Panc1 (cell line): ENCODE measurements at regions of chr2 and their contacts with region 1.

Region 1: GRCh38 chr2:121649596-121650314 is 493 bp upstream of the CLASP1 start:
- DNase-seq: peak; percentile 95
- ATAC-seq: peak; percentile 98
- H3K4me3 ChIP-seq: peak overlapping the region; percentile 92 to 95
- H3K27ac ChIP-seq: peak overlapping the region; percentile 99
- H3K4me1 ChIP-seq: peaks cover 19% of the 10 kb centered on the region
- H3K27me3 ChIP-seq: no peaks in the 10 kb centered on the region
- CTCF ChIP-seq: no peak

Region 2: DNA sequence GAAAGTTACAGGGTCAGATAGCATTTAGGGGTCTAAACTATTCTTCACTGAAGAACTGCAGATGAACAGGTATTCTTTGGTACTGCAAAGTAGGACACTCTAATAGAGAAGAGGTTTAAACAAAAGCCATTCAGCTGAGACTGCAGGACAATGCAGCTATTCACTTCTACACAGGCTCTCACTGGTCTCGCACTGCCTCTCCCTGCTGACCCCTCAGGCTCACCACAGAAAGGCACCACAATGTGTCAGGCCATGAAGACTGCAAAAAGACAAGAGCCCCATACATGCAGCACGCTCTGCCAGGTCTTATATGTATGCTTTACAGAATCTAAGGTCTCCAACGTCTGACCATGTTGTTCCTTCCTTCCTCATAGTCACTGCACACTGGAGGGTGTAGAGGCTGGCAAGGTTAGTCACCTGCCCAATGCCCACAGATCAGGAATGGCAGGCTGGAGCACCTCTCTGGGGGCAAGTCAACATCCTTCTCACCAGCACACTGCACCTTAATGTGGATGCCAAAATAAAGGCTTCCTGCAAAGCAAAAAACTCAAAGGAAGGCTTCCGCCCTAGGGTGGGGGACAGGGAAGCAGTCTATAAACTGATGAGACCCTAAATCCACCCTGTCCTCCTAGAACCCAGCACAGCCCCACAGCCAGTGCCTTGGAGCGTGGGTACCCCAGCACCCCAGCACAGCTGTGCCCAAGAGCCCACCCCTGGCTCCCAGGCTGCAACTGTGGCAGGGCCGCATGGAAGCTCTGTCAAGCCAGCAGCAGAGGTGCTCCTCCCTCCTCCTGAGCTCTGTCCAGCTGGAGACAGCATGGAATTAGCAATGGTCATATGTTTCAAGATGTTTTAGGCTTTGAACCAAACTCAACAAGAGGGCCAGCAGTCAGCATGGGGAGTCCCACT is 129.8 kb before region 1 on chr2:
- CTCF ChIA-PET with region 1: no interaction called
- POLR2A ChIA-PET with region 1: no interaction called
- in situ Hi-C with region 1: no loop called
- intact Hi-C with region 1: no loop called
- DNase-seq: no peak
- ATAC-seq: no peak
- H3K4me3 ChIP-seq: no peak overlapping the region
- H3K27ac ChIP-seq: no peak overlapping the region
- H3K4me1 ChIP-seq: no peaks in the 10 kb centered on the region
- H3K27me3 ChIP-seq: no peaks in the 10 kb centered on the region
- CTCF ChIP-seq: no peak

Region 3: GRCh38 chr2:121530212-121530705 is 119.5 kb before region 1 on chr2:
- CTCF ChIA-PET with region 1: no interaction called
- POLR2A ChIA-PET with region 1: interaction called, 12 read pairs
- in situ Hi-C with region 1: no loop called
- intact Hi-C with region 1: loop called (anchors 5 kb)
- DNase-seq: peak; percentile 22
- ATAC-seq: peak; percentile 86
- H3K4me3 ChIP-seq: peak overlapping the region; percentile 79 to 80
- H3K27ac ChIP-seq: peak overlapping the region; percentile 96
- H3K4me1 ChIP-seq: peaks cover 32% of the 10 kb centered on the region
- H3K27me3 ChIP-seq: no peaks in the 10 kb centered on the region
- CTCF ChIP-seq: no peak

Region 4: GRCh38 chr2:121596221-121597080 is 53.3 kb before region 1 on chr2:
- CTCF ChIA-PET with region 1: no interaction called
- POLR2A ChIA-PET with region 1: no interaction called
- in situ Hi-C with region 1: no loop called
- intact Hi-C with region 1: loop called (anchors 5 kb)
- DNase-seq: peak; percentile 64
- ATAC-seq: peak; percentile 87
- H3K4me3 ChIP-seq: peak overlapping the region in 1 of 2 experiments; percentile 34; a peak in 3 of 4 replicates
- H3K27ac ChIP-seq: peak overlapping the region; percentile 79
- H3K4me1 ChIP-seq: peaks cover 12% of the 10 kb centered on the region; the same call in 1 of the 2 replicates
- H3K27me3 ChIP-seq: no peaks in the 10 kb centered on the region
- CTCF ChIP-seq: peak; percentile 74

Region 5: DNA sequence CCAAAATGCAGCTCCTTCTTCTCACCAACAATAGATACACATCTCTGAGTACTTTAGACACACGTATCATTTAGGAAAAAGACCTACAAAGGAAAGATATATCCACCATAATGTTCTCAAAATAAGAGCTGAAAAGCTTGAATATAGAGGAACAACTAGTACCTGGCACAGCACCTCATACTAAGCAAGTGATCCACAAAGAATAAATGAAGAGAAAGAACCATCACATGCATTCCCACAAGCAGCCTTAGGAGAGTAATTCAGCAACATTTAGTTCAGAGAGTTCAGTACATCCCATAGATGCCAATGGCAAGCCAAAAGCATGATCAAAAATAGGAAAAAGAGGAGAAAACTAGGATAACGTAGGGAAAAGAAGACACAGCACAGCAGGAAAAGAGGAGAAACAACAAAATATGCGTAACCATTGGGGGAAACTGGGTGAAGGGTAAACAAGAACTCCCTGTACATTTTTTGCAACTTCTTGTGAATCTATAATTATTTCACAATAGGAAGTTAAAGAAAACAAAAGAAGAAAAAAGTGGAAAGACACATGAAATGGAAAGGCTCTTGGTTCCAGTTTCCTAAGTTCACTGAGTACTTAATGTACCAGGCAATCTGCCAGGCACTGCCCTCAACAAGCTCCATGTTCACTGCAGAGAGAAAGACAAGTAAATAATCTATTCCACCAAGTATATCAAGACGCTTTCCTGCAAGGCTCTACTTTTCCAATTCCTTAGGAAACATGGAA is 22.8 kb before region 1 on chr2:
- CTCF ChIA-PET with region 1: no interaction called
- POLR2A ChIA-PET with region 1: no interaction called
- in situ Hi-C with region 1: no loop called
- intact Hi-C with region 1: no loop called
- DNase-seq: no peak
- ATAC-seq: no peak
- H3K4me3 ChIP-seq: no peak overlapping the region
- H3K27ac ChIP-seq: no peak overlapping the region
- H3K4me1 ChIP-seq: no peaks in the 10 kb centered on the region
- H3K27me3 ChIP-seq: no peaks in the 10 kb centered on the region
- CTCF ChIP-seq: no peak

Region 6: GRCh38 chr2:121810959-121811853 is 161.5 kb after region 1 on chr2:
- CTCF ChIA-PET with region 1: no interaction called
- POLR2A ChIA-PET with region 1: no interaction called
- in situ Hi-C with region 1: no loop called
- intact Hi-C with region 1: no loop called
- DNase-seq: peak; percentile 33
- ATAC-seq: peak; percentile 94
- H3K4me3 ChIP-seq: no peak overlapping the region
- H3K27ac ChIP-seq: no peak overlapping the region
- H3K4me1 ChIP-seq: no peaks in the 10 kb centered on the region
- H3K27me3 ChIP-seq: no peaks in the 10 kb centered on the region
- CTCF ChIP-seq: peak; percentile 81